ENCODE measurements at regions of chr3 and their contacts with region 1.

Region 1: GRCh38 chr3:53045518-53046170 is at the start of gene SFMBT1:
- DNase-seq: peak; percentile 55 to 93 (median 73)
- ATAC-seq: peak; percentile 50
- H3K4me3 ChIP-seq: peak within 1 kb of the TSS; percentile 91
- H3K4me3 Mint-ChIP-seq: peak within 1 kb of the TSS; percentile 95
- H3K27ac ChIP-seq: peak within 1 kb of the TSS; percentile 72 to 88
- H3K27ac Mint-ChIP-seq: peak within 1 kb of the TSS; percentile 99
- H3K4me1 ChIP-seq: peaks cover 33% of the 10 kb centered on the region
- H3K4me1 Mint-ChIP-seq: peaks cover 52% of the 10 kb centered on the region
- H3K27me3 ChIP-seq: no peaks in the 10 kb centered on the region
- H3K27me3 Mint-ChIP-seq: peaks cover 3% of the 10 kb centered on the region
- CTCF ChIP-seq: no peak
- total RNA-seq, gene SFMBT1: 54.3 to 55.9 TPM

Region 2: GRCh38 chr3:52867098-52867800 is 178.4 kb before region 1 on chr3:
- CTCF ChIA-PET with region 1: no interaction called
- POLR2A ChIA-PET with region 1: no interaction called
- intact Hi-C with region 1: no loop called
- DNase-seq: no peak
- ATAC-seq: no peak
- H3K4me3 ChIP-seq: no peak overlapping the region
- H3K4me3 Mint-ChIP-seq: no peak overlapping the region
- H3K27ac ChIP-seq: no peak overlapping the region
- H3K27ac Mint-ChIP-seq: no peak overlapping the region
- H3K4me1 ChIP-seq: no peaks in the 10 kb centered on the region
- H3K4me1 Mint-ChIP-seq: peaks cover 8% of the 10 kb centered on the region
- H3K27me3 ChIP-seq: no peaks in the 10 kb centered on the region
- H3K27me3 Mint-ChIP-seq: no peaks in the 10 kb centered on the region
- CTCF ChIP-seq: no peak

Region 3: GRCh38 chr3:52897130-52898122 is 148.2 kb before region 1 on chr3 and contains the start of gene STIMATE:
- CTCF ChIA-PET with region 1: interaction called, 4 read pairs
- POLR2A ChIA-PET with region 1: interaction called, 11 read pairs
- intact Hi-C with region 1: loop called in 1 of 2 experiments (anchors 5 kb)
- DNase-seq: peak; percentile 64 to 96 (median 85)
- ATAC-seq: peak; percentile 88
- H3K4me3 ChIP-seq: peak within 1 kb of the TSS; percentile 69
- H3K4me3 Mint-ChIP-seq: peak within 1 kb of the TSS; percentile 98
- H3K27ac ChIP-seq: peak within 1 kb of the TSS; percentile 33 to 45
- H3K27ac Mint-ChIP-seq: peak within 1 kb of the TSS; percentile 82
- H3K4me1 ChIP-seq: peaks cover 49% of the 10 kb centered on the region
- H3K4me1 Mint-ChIP-seq: peaks cover 52% of the 10 kb centered on the region
- H3K27me3 ChIP-seq: no peaks in the 10 kb centered on the region
- H3K27me3 Mint-ChIP-seq: no peaks in the 10 kb centered on the region
- CTCF ChIP-seq: no peak
- total RNA-seq, gene STIMATE: 39.8 to 42.6 TPM

Region 4: GRCh38 chr3:52934630-52935530 is 110.8 kb before region 1 on chr3:
- CTCF ChIA-PET with region 1: interaction called, 3 read pairs
- POLR2A ChIA-PET with region 1: interaction called, 7 read pairs
- intact Hi-C with region 1: loop called in 1 of 2 experiments (anchors 5 kb)
- DNase-seq: peak; percentile 20 to 79 (median 34)
- ATAC-seq: peak; percentile 99
- H3K4me3 ChIP-seq: no peak overlapping the region
- H3K4me3 Mint-ChIP-seq: peak overlapping the region; percentile 14
- H3K27ac ChIP-seq: no peak overlapping the region
- H3K27ac Mint-ChIP-seq: peak overlapping the region; percentile 12
- H3K4me1 ChIP-seq: no peaks in the 10 kb centered on the region
- H3K4me1 Mint-ChIP-seq: peaks cover 17% of the 10 kb centered on the region
- H3K27me3 ChIP-seq: no peaks in the 10 kb centered on the region
- H3K27me3 Mint-ChIP-seq: no peaks in the 10 kb centered on the region
- CTCF ChIP-seq: peak; percentile 92

Region 5: GRCh38 chr3:53030619-53031449 is 14.8 kb before region 1 on chr3:
- CTCF ChIA-PET with region 1: interaction called, 7 read pairs
- POLR2A ChIA-PET with region 1: interaction called, 129 read pairs
- intact Hi-C with region 1: loop called in 1 of 2 experiments (anchors 2 kb)
- DNase-seq: peak; percentile 33 to 74 (median 53)
- ATAC-seq: peak; percentile 94
- H3K4me3 ChIP-seq: no peak overlapping the region
- H3K4me3 Mint-ChIP-seq: peak overlapping the region; percentile 53
- H3K27ac ChIP-seq: no peak overlapping the region
- H3K27ac Mint-ChIP-seq: peak overlapping the region; percentile 88
- H3K4me1 ChIP-seq: peaks cover 36% of the 10 kb centered on the region
- H3K4me1 Mint-ChIP-seq: peaks cover 65% of the 10 kb centered on the region
- H3K27me3 ChIP-seq: no peaks in the 10 kb centered on the region
- H3K27me3 Mint-ChIP-seq: no peaks in the 10 kb centered on the region
- CTCF ChIP-seq: no peak

Region 6: GRCh38 chr3:54356261-54357045 is 1310.8 kb after region 1 on chr3:
- CTCF ChIA-PET with region 1: no interaction called
- POLR2A ChIA-PET with region 1: no interaction called
- intact Hi-C with region 1: no loop called
- DNase-seq: no peak
- ATAC-seq: no peak
- H3K4me3 ChIP-seq: no peak overlapping the region
- H3K4me3 Mint-ChIP-seq: no peak overlapping the region
- H3K27ac ChIP-seq: no peak overlapping the region
- H3K27ac Mint-ChIP-seq: no peak overlapping the region
- H3K4me1 ChIP-seq: no peaks in the 10 kb centered on the region
- H3K4me1 Mint-ChIP-seq: no peaks in the 10 kb centered on the region
- H3K27me3 ChIP-seq: no peaks in the 10 kb centered on the region
- H3K27me3 Mint-ChIP-seq: peaks cover 5% of the 10 kb centered on the region
- CTCF ChIP-seq: no peak